SK-N-SH (cell line): ENCODE measurements at regions of chr7 and their contacts with region 1.

Region 1: GRCh38 chr7:140326116-140326928 is 72.0 kb downstream of the SLC37A3 start:
- DNase-seq: peak; percentile 79
- H3K4me3 ChIP-seq: no peak overlapping the region
- H3K27ac ChIP-seq: no peak overlapping the region
- H3K4me1 ChIP-seq: peaks cover 0 to 4% of the 10 kb centered on the region in 2 experiments; a peak in 1 of 4 replicates
- H3K27me3 ChIP-seq: no peaks in the 10 kb centered on the region
- CTCF ChIP-seq: peak; percentile 65
- EP300 ChIP-seq: no peak
- RAD21 ChIP-seq: peak; percentile 91

Region 2: DNA sequence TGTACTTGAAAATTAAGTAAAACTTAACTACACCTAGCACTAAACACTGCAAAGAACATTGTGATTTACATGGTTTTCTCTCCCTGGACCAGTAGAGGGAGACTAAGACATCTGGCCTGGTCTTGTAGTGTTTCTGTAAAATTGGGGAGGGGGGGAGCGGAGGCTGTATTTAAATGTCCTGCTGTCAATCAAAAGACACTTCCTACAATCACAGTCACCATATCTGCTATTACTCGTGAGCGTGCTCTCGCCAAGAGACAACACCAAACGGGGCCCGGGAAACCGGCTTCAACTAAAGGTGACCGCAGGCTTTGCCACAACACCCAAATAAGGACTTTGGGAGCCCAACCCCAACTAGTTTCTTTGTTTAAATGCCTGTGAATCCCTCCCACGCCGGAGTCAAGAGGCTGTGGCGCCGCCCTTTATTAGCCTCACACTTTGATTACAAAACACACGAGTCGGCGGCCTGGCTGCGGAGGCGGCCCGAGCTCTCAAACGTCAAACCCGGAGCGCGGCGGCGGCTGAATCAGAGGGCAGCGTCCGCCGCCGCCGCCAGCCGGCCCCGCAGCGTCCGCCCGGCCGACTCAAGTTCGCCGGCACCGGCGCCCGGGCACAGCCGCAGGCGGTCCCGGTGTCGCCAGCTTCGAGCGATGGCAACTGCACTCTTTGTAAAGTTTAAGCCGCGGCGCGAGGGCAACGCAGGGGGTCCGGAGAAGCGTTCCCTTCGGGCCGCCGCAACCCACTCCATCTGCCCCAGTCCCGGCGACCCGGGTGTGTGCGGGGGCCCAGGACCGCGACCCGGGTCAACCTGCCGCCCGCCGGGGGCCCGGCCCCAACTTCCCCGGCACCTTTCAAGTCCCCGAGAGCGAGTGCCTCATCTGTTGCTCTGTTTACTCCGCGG is 150.9 kb before region 1 on chr7:
- CTCF ChIA-PET with region 1: interaction called, 35 read pairs
- POLR2A ChIA-PET with region 1: no interaction called
- DNase-seq: peak; percentile 88
- H3K4me3 ChIP-seq: peak overlapping the region; percentile 75 to 95
- H3K27ac ChIP-seq: peak overlapping the region; percentile 70 to 84
- H3K4me1 ChIP-seq: no peaks in the 10 kb centered on the region
- H3K27me3 ChIP-seq: no peaks in the 10 kb centered on the region; the same call in 1 of the 2 replicates
- CTCF ChIP-seq: peak; percentile 97
- EP300 ChIP-seq: no peak; a peak in 1 of 4 replicates
- RAD21 ChIP-seq: peak; percentile 93

Region 3: DNA sequence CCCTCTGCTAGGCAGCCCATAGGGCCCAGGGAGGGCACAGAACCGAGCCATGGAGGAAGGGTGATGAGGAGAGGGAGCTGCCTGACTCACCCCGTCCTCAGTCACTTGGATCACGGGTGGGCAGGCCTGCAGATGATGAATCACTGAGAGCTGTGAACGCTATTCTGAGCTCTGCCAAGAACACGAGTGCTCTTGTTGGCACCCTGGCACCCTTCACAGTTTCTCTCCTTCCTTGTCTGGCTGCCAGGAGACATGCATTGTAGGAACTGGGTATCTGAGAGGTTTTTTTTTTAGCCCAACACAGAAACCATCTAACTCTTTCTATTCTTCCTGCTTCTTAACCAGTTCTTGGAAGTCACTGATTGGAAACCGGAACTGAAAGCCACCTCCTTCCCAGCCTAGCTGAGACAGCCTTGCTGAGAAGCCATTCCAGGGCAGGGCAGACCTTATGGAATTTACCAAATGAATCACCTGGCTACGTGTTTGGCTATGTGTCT is 10.1 kb before region 1 on chr7:
- CTCF ChIA-PET with region 1: interaction called, 15 read pairs
- POLR2A ChIA-PET with region 1: no interaction called
- DNase-seq: no peak
- H3K4me3 ChIP-seq: peak overlapping the region in 1 of 2 experiments; percentile 2; a peak in 1 of 4 replicates
- H3K27ac ChIP-seq: no peak overlapping the region
- H3K4me1 ChIP-seq: no peaks in the 10 kb centered on the region; a peak in 1 of 4 replicates
- H3K27me3 ChIP-seq: no peaks in the 10 kb centered on the region
- CTCF ChIP-seq: no peak
- EP300 ChIP-seq: no peak
- RAD21 ChIP-seq: no peak

Region 4: GRCh38 chr7:140342727-140343514 is 16.6 kb after region 1 on chr7:
- CTCF ChIA-PET with region 1: interaction called, 13 read pairs
- POLR2A ChIA-PET with region 1: no interaction called
- DNase-seq: peak; percentile 58
- H3K4me3 ChIP-seq: no peak overlapping the region
- H3K27ac ChIP-seq: peak overlapping the region in 1 of 2 experiments; percentile 16; a peak in 1 of 4 replicates
- H3K4me1 ChIP-seq: peaks cover 8 to 15% of the 10 kb centered on the region in 2 experiments; a peak in 3 of 4 replicates
- H3K27me3 ChIP-seq: no peaks in the 10 kb centered on the region
- CTCF ChIP-seq: peak; percentile 61
- EP300 ChIP-seq: no peak
- RAD21 ChIP-seq: peak; percentile 78